HAP-1 (cell line): ENCODE measurements at regions of chr13 and their contacts with region 1.

Region 1: DNA sequence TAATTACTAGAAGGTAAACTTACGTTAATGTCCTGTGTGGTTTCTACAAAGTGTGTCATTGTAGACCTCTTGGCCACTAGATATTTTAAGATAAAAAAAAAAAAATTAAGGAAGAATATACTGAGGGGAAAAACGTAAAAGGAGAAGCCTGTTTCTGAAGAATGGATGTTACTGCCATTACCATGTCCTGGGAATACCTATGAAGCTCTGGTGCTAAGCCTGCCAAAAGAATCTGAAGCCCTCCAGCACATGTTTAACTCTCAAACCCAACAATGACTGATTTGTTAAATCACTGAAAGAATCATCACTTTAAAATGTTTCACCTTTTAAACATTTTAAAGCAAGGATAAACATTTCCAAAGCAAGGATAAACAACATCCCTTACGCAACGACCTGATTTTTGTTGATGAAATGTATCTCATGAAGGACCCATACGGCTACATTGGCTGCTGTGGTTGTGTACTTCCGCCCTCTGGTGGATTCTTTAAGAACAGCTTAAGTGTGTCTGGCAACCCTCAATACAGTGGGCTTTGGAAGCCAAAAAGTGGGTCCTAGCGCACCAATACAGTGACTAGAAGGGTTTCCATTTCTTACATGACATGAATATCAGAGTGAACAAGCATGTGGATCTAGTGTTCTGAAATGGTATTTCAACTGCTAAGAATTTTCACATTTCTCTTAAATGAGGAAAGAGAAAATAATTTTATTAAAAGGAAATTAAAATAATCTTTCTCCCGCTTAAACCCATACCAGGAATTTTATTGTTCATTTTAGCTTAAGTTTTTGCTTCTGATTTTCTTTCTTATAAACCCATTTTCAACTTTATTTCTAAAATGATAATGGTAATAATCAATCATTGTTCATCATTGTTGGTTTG is 74.5 kb upstream of the RAP2A start:
- DNase-seq: peak; percentile 66 to 72
- H3K4me3 ChIP-seq: no peak overlapping the region
- H3K4me1 ChIP-seq: peaks cover 2% of the 10 kb centered on the region
- H3K27me3 ChIP-seq: no peaks in the 10 kb centered on the region

Region 2: GRCh38 chr13:96710166-96710862 is 649.1 kb before region 1 on chr13:
- in situ Hi-C with region 1: no loop called
- DNase-seq: no peak
- H3K4me3 ChIP-seq: no peak overlapping the region
- H3K4me1 ChIP-seq: no peaks in the 10 kb centered on the region
- H3K27me3 ChIP-seq: no peaks in the 10 kb centered on the region

Region 3: GRCh38 chr13:97124916-97125809 is 234.3 kb before region 1 on chr13:
- in situ Hi-C with region 1: loop called (anchors 10 kb)
- DNase-seq: peak; percentile 61 to 66
- H3K4me3 ChIP-seq: no peak overlapping the region
- H3K4me1 ChIP-seq: peaks cover 8% of the 10 kb centered on the region
- H3K27me3 ChIP-seq: no peaks in the 10 kb centered on the region

Region 4: GRCh38 chr13:97726664-97727280 is 367.4 kb after region 1 on chr13:
- in situ Hi-C with region 1: no loop called
- DNase-seq: no peak
- H3K4me3 ChIP-seq: no peak overlapping the region
- H3K4me1 ChIP-seq: no peaks in the 10 kb centered on the region
- H3K27me3 ChIP-seq: 0 out of 2 replicates have a peak, but pooled peaks cover 3% of the 10 kb centered on the region